B cell (primary cell): ENCODE measurements at regions of chr1 and their contacts with region 1.

Region 1: DNA sequence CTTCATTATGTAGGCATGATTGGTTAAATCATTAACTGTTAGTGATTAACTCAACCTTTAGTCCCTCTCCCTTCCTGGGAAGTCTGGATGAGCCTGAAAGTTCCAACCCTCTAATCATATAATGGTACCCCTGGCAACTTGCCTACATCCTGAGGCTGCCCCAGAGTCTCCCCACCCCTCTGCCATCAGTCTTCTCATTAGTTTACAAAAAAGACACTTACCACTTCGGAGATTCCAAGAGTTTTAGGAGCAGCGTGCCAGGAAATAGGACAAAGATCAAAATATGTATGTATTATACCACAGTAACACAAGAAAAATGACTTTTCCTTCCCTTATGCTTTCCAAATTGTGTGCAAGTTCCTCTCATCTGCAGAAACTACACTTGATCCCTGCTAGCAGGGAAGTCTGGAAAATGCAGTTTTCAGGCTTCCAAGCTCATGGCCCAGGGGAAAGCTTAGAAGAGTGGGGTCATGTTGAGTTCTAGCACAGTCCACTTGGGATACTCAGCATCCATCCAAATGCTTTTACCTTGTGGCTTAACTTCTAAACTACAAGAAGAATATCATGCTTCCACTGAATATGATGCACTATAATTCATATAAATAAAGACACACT is 64.6 kb upstream of the PPIH start:
- DNase-seq: no peak
- ATAC-seq: no peak
- H3K4me3 ChIP-seq: no peak overlapping the region
- H3K4me3 Mint-ChIP-seq: no peak overlapping the region
- H3K27ac ChIP-seq: no peak overlapping the region
- H3K27ac Mint-ChIP-seq: no peak overlapping the region
- H3K4me1 ChIP-seq: no peaks in the 10 kb centered on the region
- H3K4me1 Mint-ChIP-seq: no peaks in the 10 kb centered on the region
- H3K27me3 ChIP-seq: no peaks in the 10 kb centered on the region
- H3K27me3 Mint-ChIP-seq: peaks cover 3% of the 10 kb centered on the region
- CTCF ChIP-seq: no peak

Region 2: GRCh38 chr1:42567043-42567442 is 26.6 kb before region 1 on chr1:
- CTCF ChIA-PET with region 1: no interaction called
- POLR2A ChIA-PET with region 1: no interaction called
- intact Hi-C with region 1: no loop called
- DNase-seq: no peak
- ATAC-seq: no peak
- H3K4me3 ChIP-seq: no peak overlapping the region
- H3K4me3 Mint-ChIP-seq: no peak overlapping the region
- H3K27ac ChIP-seq: no peak overlapping the region
- H3K27ac Mint-ChIP-seq: no peak overlapping the region
- H3K4me1 ChIP-seq: no peaks in the 10 kb centered on the region
- H3K4me1 Mint-ChIP-seq: no peaks in the 10 kb centered on the region
- H3K27me3 ChIP-seq: no peaks in the 10 kb centered on the region
- H3K27me3 Mint-ChIP-seq: no peaks in the 10 kb centered on the region
- CTCF ChIP-seq: no peak

Region 3: GRCh38 chr1:42777852-42778251 is 184.3 kb after region 1 on chr1:
- CTCF ChIA-PET with region 1: no interaction called
- POLR2A ChIA-PET with region 1: interaction called, 13 read pairs
- intact Hi-C with region 1: no loop called
- DNase-seq: peak; percentile 45
- ATAC-seq: peak; percentile 60
- H3K4me3 ChIP-seq: no peak overlapping the region
- H3K4me3 Mint-ChIP-seq: no peak overlapping the region
- H3K27ac ChIP-seq: no peak overlapping the region
- H3K27ac Mint-ChIP-seq: no peak overlapping the region
- H3K4me1 ChIP-seq: no peaks in the 10 kb centered on the region
- H3K4me1 Mint-ChIP-seq: peaks cover 5% of the 10 kb centered on the region
- H3K27me3 ChIP-seq: no peaks in the 10 kb centered on the region
- H3K27me3 Mint-ChIP-seq: no peaks in the 10 kb centered on the region
- CTCF ChIP-seq: peak; percentile 70